H1 (cell line): ENCODE measurements at regions of chr14 and their contacts with region 1.

Region 1: GRCh38 chr14:102662636-102663430 is 70.4 kb downstream of the RCOR1 start:
- DNase-seq: peak in 1 of 2 experiments; percentile 46
- H3K4me3 ChIP-seq: peak overlapping the region in 1 of 4 experiments; percentile 36; a peak in 1 of 8 replicates
- H3K27ac ChIP-seq: peak overlapping the region; percentile 46; the same call in 1 of the 2 replicates
- H3K4me1 ChIP-seq: peaks cover 5 to 19% (median 10%) of the 10 kb centered on the region in 4 experiments
- H3K27me3 ChIP-seq: no peaks in the 10 kb centered on the region
- CTCF ChIP-seq: no peak
- EP300 ChIP-seq: no peak
- POLR2A ChIP-seq: peak in 1 of 2 experiments; percentile 67; a peak in 1 of 3 replicates
- RAD21 ChIP-seq: no peak

Region 2: GRCh38 chr14:102645746-102646440 is 16.9 kb before region 1 on chr14:
- CTCF ChIA-PET with region 1: interaction called, 4 read pairs
- POLR2A ChIA-PET with region 1: interaction called, 12 read pairs
- DNase-seq: no peak
- H3K4me3 ChIP-seq: no peak overlapping the region
- H3K27ac ChIP-seq: no peak overlapping the region
- H3K4me1 ChIP-seq: peaks cover 0 to 12% (median 5%) of the 10 kb centered on the region in 4 experiments; a peak in 4 of 7 replicates
- H3K27me3 ChIP-seq: no peaks in the 10 kb centered on the region
- CTCF ChIP-seq: no peak
- EP300 ChIP-seq: no peak
- POLR2A ChIP-seq: no peak
- RAD21 ChIP-seq: no peak